RWPE1 (cell line): ENCODE measurements at regions of chr6 and their contacts with region 1.

Region 1: GRCh38 chr6:42467651-42468050 is 15.9 kb upstream of the TRERF1 start:
- DNase-seq: no peak
- H3K27ac ChIP-seq: no peak overlapping the region
- CTCF ChIP-seq: no peak

Region 2: GRCh38 chr6:42260972-42261371 is 206.7 kb before region 1 on chr6:
- CTCF ChIA-PET with region 1: no interaction called
- POLR2A ChIA-PET with region 1: no interaction called
- DNase-seq: no peak
- H3K27ac ChIP-seq: peak overlapping the region; percentile 65
- CTCF ChIP-seq: no peak; the same call in 1 of the 2 replicates

Region 3: DNA sequence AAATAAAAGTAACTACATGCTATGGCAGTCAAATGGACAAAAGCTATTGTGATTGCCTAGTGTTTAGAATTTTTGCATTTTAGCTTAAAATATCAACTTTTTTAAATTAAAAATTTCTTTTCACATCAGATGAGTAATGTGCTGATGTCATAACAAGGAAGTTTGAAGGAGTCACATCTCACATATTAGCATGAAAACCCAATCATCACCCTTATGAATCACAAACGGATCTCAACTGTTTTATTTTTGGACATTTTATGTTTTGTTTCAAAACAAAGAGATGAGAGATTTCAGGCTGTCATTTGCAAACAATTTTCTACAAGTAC is 37.7 kb after region 1 on chr6:
- CTCF ChIA-PET with region 1: no interaction called
- POLR2A ChIA-PET with region 1: interaction called, 14 read pairs
- DNase-seq: peak; percentile 49
- H3K27ac ChIP-seq: peak overlapping the region; percentile 64
- CTCF ChIP-seq: no peak